ENCODE measurements at regions of chr7 and their contacts with region 1.

Region 1: DNA sequence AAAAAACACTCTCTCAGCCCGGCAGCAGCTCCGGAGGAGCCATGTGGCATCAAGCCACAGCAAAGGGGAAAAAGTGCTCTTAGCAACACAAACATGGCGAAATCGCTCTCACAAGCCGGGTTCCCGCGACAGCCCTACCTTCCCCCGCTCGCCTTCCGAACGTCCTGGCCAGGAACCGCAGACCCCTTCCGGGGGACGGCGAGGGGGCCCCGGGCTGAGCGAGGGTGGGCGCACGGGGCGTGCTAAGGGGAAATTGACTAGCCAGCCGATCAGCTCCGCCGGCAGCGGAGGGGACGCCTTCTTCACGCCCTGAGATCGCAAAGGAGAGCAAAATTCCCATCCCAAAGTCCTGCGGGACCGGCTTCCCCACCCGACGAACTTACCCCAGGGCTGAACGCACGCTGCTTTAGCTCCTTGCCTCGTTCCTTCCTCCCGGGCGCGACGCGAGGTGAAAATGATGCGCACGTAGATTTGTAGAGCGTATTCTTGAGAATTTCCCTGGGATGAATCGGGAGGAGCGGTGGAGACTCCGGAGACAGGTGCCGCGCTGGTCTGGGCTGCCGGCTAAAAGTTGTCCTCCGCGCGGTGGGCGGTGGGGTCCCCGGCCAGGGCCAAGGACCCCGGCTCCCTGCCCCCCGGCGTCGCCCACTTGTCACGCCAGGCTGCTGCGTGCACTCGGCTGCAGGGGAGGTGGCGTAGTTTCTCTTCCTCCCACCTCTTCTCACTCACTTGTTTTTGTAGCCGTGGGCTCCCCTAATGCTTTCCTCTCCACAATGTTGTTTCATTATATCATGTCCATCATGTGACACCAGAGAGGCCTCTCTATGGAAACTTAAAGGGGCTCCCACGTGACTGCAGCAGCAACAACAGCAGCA is 220.1 kb upstream of the MKLN1 start:
- DNase-seq: peak; percentile 89

Region 2: GRCh38 chr7:131011976-131012375 is 95.6 kb before region 1 on chr7:
- intact Hi-C with region 1: no loop called
- DNase-seq: no peak

Region 3: GRCh38 chr7:131293018-131293417 is 185.4 kb after region 1 on chr7:
- intact Hi-C with region 1: loop called in 1 of 2 experiments (anchors 10 kb)
- DNase-seq: peak; percentile 87

Region 4: DNA sequence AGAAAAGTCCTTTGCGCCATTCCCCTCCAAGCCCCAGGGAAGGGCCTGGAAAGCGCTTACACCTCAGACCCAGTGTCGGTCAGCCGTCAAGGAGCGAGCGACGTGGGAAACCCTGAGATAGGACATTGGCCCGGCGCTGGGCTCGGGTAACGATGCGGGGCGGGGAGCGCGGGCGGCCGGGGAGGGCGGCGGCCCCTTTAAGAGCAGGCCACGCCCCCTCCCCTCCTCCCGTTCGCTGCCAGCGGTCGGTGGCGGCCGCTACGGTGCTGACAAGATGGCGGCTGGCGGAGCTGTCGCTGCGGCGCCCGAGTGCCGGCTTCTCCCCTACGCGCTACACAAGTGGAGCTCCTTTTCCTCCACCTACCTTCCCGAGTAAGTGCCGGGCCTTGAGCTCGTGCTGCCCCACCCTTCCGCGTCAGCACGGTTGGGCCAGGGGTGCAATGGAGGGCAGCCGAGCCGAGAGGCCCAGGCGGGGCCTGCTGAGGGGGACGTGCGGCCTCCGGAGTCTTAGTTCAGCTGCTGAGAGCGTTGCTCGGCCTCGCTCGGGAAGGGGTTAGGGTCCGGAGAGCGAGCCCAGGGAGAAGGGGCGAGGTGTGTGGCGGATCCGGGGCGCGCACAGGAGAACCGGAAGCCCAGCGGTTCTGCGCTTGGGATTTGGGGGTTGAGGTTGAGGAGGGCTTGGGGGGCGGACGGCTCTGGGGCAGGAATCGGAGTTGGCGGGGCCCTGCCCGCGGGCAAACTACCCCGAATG is 220.2 kb after region 1 on chr7 and contains the start of gene MKLN1:
- intact Hi-C with region 1: loop called in 1 of 2 experiments (anchors 5 kb)
- DNase-seq: peak; percentile 97
- total RNA-seq, gene MKLN1: 72.5 to 75.6 TPM

Region 5: GRCh38 chr7:131400833-131401593 is 293.4 kb after region 1 on chr7:
- intact Hi-C with region 1: loop called in 1 of 2 experiments (anchors 10 kb)
- DNase-seq: no peak

Region 6: DNA sequence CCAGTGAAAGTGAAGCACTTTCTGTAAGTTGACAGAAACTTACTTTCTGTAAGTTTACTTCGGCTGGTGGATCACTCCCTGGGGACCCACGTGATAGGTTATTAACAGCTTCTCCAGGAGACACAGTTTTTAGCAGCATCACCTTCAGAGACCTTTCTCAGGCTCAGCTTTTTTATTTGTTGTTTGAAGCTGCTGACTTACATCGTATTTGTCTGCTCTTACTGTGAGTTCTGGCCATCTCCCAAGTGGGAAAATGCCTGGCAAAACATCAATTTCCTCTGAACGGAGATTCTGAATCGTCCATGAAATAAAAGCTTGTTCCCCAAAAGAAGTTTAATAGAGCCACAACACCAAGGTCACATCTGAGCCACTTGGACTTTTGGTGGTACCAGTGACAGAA is 627.5 kb after region 1 on chr7:
- intact Hi-C with region 1: no loop called
- DNase-seq: no peak